T-cell (primary cell): ENCODE measurements at regions of chr18 and their contacts with region 1.

Region 1: GRCh38 chr18:23108496-23108895 is 26.8 kb upstream of the CABLES1 start:
- DNase-seq: no peak
- ATAC-seq: no peak
- H3K4me3 ChIP-seq: no peak overlapping the region
- H3K4me3 Mint-ChIP-seq: no peak overlapping the region
- H3K27ac ChIP-seq: no peak overlapping the region
- H3K27ac Mint-ChIP-seq: no peak overlapping the region
- H3K4me1 ChIP-seq: no peaks in the 10 kb centered on the region
- H3K4me1 Mint-ChIP-seq: peaks cover 3 to 8% (median 7%) of the 10 kb centered on the region in 3 donors
- H3K27me3 ChIP-seq: peaks cover 0 to 3% of the 10 kb centered on the region in 2 experiments
- H3K27me3 Mint-ChIP-seq: peaks cover 0 to 1% of the 10 kb centered on the region in 2 donors

Region 2: GRCh38 chr18:23635283-23636070 is 527.0 kb after region 1 on chr18:
- CTCF ChIA-PET with region 1: no interaction called
- POLR2A ChIA-PET with region 1: interaction called in 1 of 2 experiments, 12 read pairs
- DNase-seq: no peak
- ATAC-seq: no peak
- H3K4me3 ChIP-seq: no peak overlapping the region
- H3K4me3 Mint-ChIP-seq: no peak overlapping the region
- H3K27ac ChIP-seq: no peak overlapping the region
- H3K27ac Mint-ChIP-seq: no peak overlapping the region
- H3K4me1 ChIP-seq: no peaks in the 10 kb centered on the region
- H3K4me1 Mint-ChIP-seq: peaks cover 5 to 9% (median 9%) of the 10 kb centered on the region in 3 donors
- H3K27me3 ChIP-seq: peaks cover 0 to 16% of the 10 kb centered on the region in 2 experiments
- H3K27me3 Mint-ChIP-seq: peaks cover 3 to 4% of the 10 kb centered on the region in 2 donors